GM10248 (cell line): ENCODE measurements at regions of chr6 and their contacts with region 1.

Region 1: DNA sequence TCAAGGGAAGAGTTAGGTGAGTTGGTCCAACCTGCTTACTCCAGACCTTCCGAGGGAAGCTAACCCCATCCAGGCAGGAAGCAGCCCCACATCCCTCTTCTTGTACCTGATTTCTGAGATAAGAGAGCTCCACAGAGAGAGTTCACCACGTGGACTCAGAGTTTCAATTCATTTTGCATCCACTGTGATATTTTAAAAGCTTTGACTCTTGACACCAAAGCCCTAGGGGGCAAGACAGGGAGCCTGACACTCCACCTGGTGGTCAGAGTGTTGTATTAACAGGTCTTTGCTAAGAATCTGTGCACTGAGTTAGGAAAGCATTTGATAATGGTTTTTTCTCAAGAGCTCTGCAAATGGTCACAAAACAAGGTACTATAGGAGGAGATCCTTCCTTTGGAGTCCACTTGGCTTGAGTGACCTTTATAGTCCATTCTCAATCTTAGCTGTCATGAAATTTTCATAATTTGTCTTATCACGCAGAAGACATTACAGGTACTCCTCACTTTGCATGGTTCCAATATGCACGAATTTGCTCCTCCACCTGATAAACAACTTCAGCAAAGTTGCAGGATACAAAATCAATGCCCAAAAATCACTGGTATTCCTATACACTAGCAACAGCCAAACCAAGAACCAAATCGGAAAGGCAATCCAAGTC is 56.2 kb upstream of the RIPOR2 start:
- DNase-seq: peak; percentile 68
- CTCF ChIP-seq: peak; percentile 79

Region 2: GRCh38 chr6:24855395-24856245 is 136.3 kb before region 1 on chr6:
- CTCF ChIA-PET with region 1: interaction called, 91 read pairs
- POLR2A ChIA-PET with region 1: no interaction called
- DNase-seq: peak; percentile 78
- CTCF ChIP-seq: peak; percentile 81

Region 3: DNA sequence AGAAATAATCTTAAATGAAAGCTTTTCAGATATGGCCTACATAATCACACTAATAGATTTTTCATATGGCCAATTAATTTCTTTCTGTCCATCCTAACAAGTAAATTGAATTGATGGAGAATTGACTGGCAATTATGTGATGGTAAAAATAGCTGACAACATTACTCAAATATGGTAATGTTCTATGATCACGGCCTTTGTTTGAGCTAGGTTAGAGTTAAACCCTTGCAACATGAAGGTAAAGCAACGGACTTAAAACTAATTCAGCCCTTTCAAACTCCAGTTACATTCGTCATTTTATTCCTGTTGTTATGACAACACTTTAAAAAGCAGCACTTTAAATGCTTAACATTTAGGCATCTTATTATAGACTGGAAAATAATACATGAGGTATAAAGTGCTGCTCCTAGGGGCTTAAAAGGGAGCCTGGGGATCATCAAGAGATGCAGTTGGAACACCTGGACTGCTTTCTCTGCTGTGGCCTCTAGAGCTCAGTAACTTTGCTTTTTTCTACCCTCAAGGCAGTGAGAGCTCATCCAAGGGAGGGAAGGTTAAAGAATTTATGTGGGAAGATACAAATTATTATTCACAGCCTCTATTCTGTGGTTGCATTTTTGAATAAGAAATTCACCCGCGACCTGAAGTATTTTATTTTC is 103.1 kb before region 1 on chr6:
- CTCF ChIA-PET with region 1: interaction called, 27 read pairs
- POLR2A ChIA-PET with region 1: no interaction called
- DNase-seq: no peak
- CTCF ChIP-seq: no peak

Region 4: DNA sequence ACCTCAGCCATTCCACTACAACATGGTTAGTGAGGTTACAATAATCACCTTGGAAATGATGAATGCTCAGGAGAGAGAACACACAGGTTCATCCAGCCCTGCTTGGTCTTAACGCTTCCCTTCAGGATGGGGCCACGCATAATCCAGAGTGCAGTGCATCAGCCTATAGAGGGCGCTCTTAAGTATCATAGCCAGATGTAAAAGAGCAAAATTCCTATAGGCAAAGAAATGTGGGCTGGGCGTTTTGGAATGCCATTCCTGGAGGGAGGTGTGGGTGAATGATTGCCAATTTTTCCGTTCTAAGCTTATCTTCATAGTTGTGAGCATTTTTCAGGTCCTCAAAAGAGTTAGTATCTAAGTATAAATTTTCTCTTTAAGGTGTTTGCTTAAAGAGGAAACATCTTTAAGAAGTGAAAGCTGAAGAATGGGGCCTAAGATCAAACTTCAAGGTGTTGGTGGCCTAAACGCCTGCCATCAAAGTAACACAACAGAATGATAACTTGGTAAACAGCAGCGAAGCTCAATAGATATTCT is 58.0 kb before region 1 on chr6:
- CTCF ChIA-PET with region 1: interaction called, 156 read pairs
- POLR2A ChIA-PET with region 1: no interaction called
- DNase-seq: no peak
- CTCF ChIP-seq: peak; percentile 88

Region 5: GRCh38 chr6:24980507-24981387 is 11.2 kb before region 1 on chr6:
- CTCF ChIA-PET with region 1: interaction called, 74 read pairs
- POLR2A ChIA-PET with region 1: no interaction called
- DNase-seq: no peak
- CTCF ChIP-seq: no peak

Region 6: GRCh38 chr6:25061289-25061936 is 69.5 kb after region 1 on chr6:
- CTCF ChIA-PET with region 1: interaction called, 20 read pairs
- POLR2A ChIA-PET with region 1: no interaction called
- DNase-seq: no peak
- CTCF ChIP-seq: no peak